Activated CD4-positive, alpha-beta T cell treated with anti-CD3 and anti-CD28 coated beads, Interleukin-2, amount 10 ng/mL, durations not matched to agents 24 days and 14 days (primary cell): ENCODE measurements at regions of chr9 and their contacts with region 1.

Region 1: GRCh38 chr9:2132484-2133082 is 117.4 kb downstream of the SMARCA2 start:
- DNase-seq: no peak
- H3K4me3 Mint-ChIP-seq: no peak overlapping the region
- H3K27ac Mint-ChIP-seq: no peak overlapping the region
- H3K4me1 Mint-ChIP-seq: peaks cover 4% of the 10 kb centered on the region
- H3K27me3 Mint-ChIP-seq: no peaks in the 10 kb centered on the region

Region 2: DNA sequence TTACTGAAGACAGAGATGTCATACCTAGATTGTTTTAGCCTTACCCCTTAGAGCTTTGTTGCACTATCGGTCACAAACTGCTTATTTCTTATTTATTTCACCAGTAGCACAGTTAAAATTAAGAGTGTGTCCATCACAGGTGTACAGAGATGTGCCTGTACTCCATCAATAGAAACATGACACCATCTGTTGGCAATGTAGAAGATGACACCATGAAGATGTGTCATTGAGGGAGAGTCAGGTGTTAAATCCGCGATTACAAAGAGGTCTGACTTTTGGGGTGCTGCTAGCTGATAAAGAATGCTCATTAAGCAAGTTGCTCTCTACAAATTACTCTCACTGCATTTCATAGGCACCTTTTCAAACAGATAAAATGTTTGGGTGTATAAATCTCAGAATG is 47.0 kb after region 1 on chr9:
- intact Hi-C with region 1: loop called (anchors 1 kb)
- DNase-seq: no peak
- H3K4me3 Mint-ChIP-seq: no peak overlapping the region
- H3K27ac Mint-ChIP-seq: no peak overlapping the region
- H3K4me1 Mint-ChIP-seq: peaks cover 3% of the 10 kb centered on the region
- H3K27me3 Mint-ChIP-seq: no peaks in the 10 kb centered on the region

Region 3: DNA sequence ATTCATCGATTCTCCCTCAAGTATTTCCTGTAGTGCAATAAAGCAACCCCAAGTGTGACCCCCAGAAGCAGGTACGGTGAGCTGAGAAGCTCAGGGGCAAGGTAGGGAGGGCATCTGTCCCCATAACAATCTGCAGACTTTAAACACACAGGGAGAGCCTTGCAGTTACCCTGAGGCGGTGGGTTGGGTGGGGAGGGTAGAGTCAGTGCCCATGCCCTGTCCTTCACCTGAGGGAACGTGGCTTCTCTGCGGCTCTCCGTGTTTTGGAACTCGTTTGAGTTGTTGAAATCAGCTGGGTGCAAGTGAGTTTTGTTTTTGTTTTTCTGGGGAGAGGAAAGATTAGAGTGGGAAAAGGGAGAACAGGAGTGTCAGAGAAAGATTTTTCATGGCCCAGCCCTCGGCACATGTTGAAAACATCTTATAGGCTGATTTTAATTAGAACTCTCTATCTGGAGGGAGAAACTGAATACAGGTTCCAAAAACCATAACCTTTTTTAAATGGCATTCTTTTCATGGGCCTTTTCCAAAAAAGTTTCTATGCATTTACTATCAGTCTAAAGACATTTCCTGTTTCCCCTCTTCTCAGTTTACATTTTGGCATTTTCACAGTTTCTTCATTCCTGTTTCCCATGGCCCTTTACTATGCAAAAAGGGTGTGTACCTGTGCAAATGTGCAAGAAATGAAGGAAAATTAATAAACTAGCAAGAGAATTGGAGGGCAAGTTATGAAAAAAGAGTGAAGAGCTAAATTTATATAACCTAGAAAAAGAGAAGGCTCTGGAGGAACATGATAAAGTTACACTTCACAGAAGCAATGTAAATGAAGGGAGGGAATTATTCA is 222.5 kb after region 1 on chr9:
- intact Hi-C with region 1: loop called (anchors 5 kb)
- DNase-seq: no peak
- H3K4me3 Mint-ChIP-seq: no peak overlapping the region
- H3K27ac Mint-ChIP-seq: no peak overlapping the region
- H3K4me1 Mint-ChIP-seq: no peaks in the 10 kb centered on the region
- H3K27me3 Mint-ChIP-seq: no peaks in the 10 kb centered on the region